ENCODE measurements at regions of chr20 and their contacts with region 1.

Region 1: DNA sequence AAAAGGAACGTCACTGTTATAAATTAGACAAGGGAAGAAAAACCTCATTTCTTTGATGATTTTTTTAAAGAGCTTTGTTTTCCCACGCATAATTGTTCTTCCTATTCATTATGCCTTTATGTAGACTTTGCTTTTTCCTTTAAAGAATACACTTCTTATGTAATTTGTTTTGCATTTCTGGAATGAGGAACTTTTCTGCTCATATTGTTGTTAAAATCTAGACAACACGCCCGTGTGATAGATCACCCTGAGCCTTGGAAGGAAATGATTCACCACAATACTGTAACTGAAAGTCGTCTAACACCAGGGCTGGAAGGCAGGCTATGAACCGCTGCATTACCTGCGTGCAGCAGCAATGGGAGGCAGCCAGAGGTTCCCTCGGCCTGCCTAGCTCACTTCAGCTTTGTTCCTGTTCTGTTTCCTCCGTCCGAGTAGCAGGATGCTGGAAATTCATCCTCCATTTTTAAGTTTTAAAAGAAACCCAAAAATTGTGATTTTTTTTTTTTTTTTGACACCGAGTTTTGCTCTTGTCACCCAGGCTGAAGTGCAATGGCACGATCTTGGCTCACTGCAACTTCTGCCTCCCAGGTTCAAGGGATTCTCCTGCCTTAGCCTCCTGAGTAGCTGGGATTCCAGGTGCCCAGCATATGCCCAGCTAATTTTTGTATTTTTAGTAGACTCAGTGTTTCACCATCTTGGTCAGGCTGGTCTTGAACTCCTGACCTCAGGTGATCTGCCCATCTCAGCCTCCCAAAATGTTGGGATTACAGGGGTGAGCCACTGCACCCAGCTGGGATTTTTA is 49.6 kb upstream of the ZNF217 start:
- DNase-seq: peak; percentile 44 to 80 (median 62)
- ATAC-seq: peak; percentile 94 to 97
- H3K4me3 Mint-ChIP-seq: peak overlapping the region; percentile 70 to 94 (median 84)
- H3K27ac Mint-ChIP-seq: peak overlapping the region; percentile 94 to 99 (median 97)
- H3K4me1 Mint-ChIP-seq: peaks cover 26 to 57% (median 51%) of the 10 kb centered on the region in 4 donors
- H3K27me3 Mint-ChIP-seq: no peaks in the 10 kb centered on the region

Region 2: DNA sequence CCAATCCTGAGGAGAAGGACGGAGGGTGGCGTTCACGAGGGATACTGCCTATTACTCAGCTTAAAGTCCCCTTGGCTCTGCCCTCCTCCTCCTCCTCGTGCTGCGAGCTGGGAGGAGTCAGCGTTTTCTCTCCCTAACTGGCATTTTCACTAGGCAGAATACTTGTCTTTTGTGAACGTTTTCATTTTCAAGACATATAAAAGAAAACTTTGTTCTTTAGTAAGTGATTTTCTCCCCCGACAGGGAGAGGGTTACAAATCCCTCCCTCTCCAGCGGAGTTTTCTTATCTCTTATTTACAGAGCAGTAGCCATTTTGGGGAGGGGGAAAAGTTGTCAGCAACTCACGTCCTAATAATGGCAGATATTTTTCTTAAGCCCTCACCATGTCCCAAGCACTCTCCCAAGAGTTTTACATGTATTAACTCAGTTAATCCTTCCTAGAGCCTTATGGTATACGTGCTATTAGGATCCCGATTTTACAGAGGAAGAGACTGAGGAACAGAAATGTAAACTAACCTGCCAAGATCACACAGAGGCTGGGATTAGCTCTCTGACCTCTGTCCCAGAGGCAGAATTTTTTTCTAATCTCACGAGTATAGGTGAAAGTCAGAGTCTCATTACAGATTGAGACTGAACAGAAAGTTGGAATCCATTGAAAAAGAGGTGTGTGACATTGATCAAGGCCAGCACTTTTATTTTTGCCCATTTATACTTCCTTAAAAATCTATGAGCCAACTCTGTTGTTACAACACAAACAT is 19.6 kb before region 1 on chr20:
- POLR2A ChIA-PET with region 1: interaction called, 10 read pairs
- DNase-seq: peak in 4 of 10 donors; percentile 5 to 37 (median 20)
- ATAC-seq: peak; percentile 63 to 74
- H3K4me3 Mint-ChIP-seq: peak overlapping the region; percentile 76 to 90 (median 82)
- H3K27ac Mint-ChIP-seq: peak overlapping the region; percentile 89 to 98 (median 94)
- H3K4me1 Mint-ChIP-seq: peaks cover 14 to 52% (median 49%) of the 10 kb centered on the region in 4 donors
- H3K27me3 Mint-ChIP-seq: no peaks in the 10 kb centered on the region

Region 3: DNA sequence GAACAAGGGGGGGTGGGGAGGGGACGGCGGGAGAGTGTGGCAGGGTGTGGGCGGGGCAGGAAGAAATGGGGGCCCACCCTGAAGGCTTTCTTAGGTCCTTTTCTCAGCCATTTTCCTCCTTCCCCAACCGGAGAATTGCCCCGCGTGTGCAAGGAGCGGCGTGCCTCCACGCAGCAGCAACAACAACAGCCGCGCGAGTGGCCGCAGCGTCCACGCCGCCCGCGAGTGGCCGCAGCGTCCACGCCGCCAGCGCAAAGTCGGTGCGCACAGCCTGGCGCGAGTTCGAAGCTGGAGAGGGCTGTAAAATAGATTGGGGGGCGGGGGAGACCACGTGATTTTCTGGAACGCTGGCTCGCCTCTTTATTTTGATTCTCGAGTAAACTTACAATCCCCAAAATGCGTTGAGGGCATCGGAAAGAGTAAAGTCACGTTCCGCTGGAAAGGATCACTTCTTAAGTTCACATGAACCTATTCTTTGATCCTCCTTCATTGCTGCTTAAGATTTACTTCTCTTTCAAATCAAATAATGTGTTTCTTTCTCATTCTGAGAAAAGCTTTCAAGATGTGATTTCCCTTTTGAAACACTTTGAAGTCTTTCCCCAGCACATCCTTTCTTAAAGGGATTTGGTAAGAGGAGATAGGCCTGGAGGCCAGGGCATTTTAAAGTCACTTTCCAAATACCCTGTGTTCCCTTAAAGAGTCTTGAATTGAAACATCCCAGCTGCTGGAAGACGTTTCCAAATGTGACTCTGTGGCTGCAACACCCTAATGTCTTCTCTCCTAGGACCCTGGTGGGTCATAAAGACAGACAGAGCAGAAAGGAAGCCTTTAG is 17.1 kb after region 1 on chr20:
- POLR2A ChIA-PET with region 1: interaction called, 31 read pairs
- DNase-seq: peak in 8 of 10 donors; percentile 13 to 52 (median 32)
- ATAC-seq: peak; percentile 42 to 48
- H3K4me3 Mint-ChIP-seq: peak overlapping the region; percentile 81 to 93 (median 86)
- H3K27ac Mint-ChIP-seq: peak overlapping the region; percentile 82 to 96 (median 92)
- H3K4me1 Mint-ChIP-seq: peaks cover 18 to 70% (median 66%) of the 10 kb centered on the region in 4 donors
- H3K27me3 Mint-ChIP-seq: no peaks in the 10 kb centered on the region